AG04450 (cell line): ENCODE measurements at regions of chr1 and their contacts with region 1.

Region 1: DNA sequence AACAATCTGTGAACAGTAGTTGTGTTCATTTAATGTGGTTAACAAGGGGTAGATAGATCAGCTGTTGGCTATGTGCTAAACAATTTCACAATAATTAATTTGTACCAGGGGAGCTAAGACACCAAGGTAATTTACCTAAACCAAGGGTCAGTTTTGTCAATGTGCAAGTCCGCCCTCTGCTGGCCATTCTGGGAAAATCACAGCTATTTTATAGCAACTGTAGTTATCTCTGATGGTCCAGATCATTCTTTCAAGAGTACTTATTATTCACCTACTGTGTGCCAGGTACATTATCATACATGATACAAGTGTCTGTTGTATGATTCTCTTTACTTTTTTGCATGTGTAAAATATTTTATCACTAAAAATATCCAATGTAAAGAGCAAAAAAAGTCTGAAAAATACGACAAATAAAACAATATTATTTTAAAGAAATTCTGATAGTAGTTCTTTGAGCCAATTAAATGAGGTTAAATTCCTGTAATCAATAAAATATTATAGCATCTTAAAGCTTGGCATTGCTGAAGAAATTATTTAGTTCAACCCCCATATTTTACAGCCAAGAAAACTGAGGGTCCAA is 312.3 kb upstream of the FAM78B start:
- DNase-seq: peak; percentile 6
- H3K4me3 ChIP-seq: no peak overlapping the region
- H3K27ac ChIP-seq: no peak overlapping the region
- H3K27me3 ChIP-seq: no peaks in the 10 kb centered on the region
- CTCF ChIP-seq: peak; percentile 75

Region 2: DNA sequence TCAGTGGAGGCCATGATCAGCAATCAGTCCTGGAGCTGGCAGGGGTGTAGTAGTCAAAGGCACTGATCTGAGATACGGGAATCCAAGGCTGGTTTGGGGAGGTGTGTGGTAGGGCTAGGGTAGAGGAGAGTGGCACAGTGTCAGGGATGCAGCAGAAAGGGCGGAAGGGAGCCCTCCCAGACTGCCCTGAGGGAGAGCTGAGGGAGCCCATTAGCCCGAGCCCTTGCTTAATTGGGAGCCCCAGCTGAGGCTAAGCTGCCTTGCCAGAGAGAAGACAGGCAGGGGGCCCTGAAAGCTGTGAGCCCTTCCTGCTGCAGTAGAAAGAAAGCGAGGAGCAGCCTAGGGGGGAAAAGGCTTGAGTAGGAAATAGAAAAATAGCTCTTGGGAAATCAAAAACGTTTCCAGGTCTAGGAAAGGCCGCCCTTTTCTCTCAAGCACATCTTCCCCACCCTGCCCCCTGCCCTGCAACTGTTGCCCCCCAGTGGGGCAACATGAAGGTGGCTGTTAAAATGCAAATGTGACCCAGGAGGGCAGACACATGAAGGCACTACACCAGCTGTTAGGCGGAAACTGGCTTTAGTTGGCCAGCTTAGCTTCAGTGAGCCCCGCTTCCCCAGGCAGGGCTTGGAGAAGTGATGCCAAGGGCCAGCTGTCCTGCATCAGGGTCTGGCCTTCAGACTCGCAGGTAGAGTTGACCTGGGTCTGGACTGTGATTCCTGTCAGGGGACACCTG is 545.5 kb before region 1 on chr1:
- CTCF ChIA-PET with region 1: interaction called, 53 read pairs
- POLR2A ChIA-PET with region 1: no interaction called
- DNase-seq: no peak
- H3K4me3 ChIP-seq: no peak overlapping the region
- H3K27ac ChIP-seq: no peak overlapping the region
- H3K27me3 ChIP-seq: peaks cover 2% of the 10 kb centered on the region
- CTCF ChIP-seq: no peak

Region 3: GRCh38 chr1:166489670-166490436 is 10.7 kb after region 1 on chr1:
- CTCF ChIA-PET with region 1: interaction called, 13 read pairs
- POLR2A ChIA-PET with region 1: no interaction called
- DNase-seq: no peak
- H3K4me3 ChIP-seq: no peak overlapping the region
- H3K27ac ChIP-seq: no peak overlapping the region
- H3K27me3 ChIP-seq: no peaks in the 10 kb centered on the region
- CTCF ChIP-seq: no peak